Activated T-helper 1 cell treated with anti-CD3 and anti-CD28 coated beads, Interleukin-12 subunit alpha, Interleukin-12 subunit beta, Interleukin-2, Interleukin-4 antibody, amounts not matched to agents 30 ng/mL and 10 ng/mL and 1 ng/mL, durations not matched to agents 14 hours and 24 hours and 36 hours (primary cell): ENCODE measurements at regions of chr10 and their contacts with region 1.

Region 1: GRCh38 chr10:6625428-6625827 is 45.4 kb upstream of the PRKCQ start:
- DNase-seq: no peak
- H3K4me3 Mint-ChIP-seq: no peak overlapping the region
- H3K27ac Mint-ChIP-seq: no peak overlapping the region
- H3K4me1 Mint-ChIP-seq: peaks cover 29% of the 10 kb centered on the region
- H3K27me3 Mint-ChIP-seq: no peaks in the 10 kb centered on the region

Region 2: DNA sequence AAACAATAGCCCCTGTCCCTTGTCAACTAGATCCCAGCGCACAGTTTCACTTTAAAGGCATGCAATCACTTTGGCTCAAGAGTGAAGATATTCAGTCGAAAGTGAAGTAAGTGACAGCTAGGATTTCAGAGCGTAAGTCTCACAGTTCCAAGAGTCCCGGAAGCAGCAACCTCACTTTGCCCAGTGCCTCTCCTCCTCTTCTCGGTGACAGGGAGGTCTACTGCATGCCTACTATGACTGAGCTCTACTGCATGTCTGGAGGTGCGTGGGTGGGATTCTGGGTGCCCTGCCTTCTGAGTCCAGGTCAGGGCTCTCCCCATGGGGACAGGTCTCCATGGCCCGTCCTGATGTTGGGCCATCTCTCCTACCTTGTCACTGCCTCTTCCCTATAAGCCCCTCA is 62.4 kb before region 1 on chr10:
- intact Hi-C with region 1: no loop called
- DNase-seq: peak; percentile 43
- H3K4me3 Mint-ChIP-seq: peak overlapping the region; percentile 74
- H3K27ac Mint-ChIP-seq: peak overlapping the region; percentile 81
- H3K4me1 Mint-ChIP-seq: peaks cover 81% of the 10 kb centered on the region
- H3K27me3 Mint-ChIP-seq: no peaks in the 10 kb centered on the region

Region 3: DNA sequence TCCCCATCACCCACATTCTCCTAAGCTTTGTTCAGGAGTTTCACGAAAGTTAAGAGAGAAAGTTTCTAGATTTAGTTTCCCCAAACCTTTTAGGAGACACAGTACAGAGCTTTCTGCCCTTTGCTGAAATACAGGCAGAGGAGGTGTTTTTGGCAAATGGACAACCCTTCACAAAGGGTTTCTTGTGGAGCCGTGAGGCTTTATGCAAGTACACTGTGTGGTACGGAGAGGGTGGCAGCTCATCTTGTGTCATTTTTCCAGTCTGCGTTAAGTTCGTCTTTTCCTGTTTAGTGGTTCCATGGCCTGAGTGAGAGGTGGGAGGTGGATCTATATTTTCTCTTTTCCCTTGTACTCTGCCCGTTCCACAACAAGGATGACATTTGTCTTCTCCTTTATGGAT is 170.1 kb after region 1 on chr10:
- intact Hi-C with region 1: loop called (anchors 5 kb)
- DNase-seq: no peak
- H3K4me3 Mint-ChIP-seq: no peak overlapping the region
- H3K27ac Mint-ChIP-seq: no peak overlapping the region
- H3K4me1 Mint-ChIP-seq: no peaks in the 10 kb centered on the region
- H3K27me3 Mint-ChIP-seq: peaks cover 13% of the 10 kb centered on the region